ENCODE measurements at regions of chr6 and their contacts with region 1.

Region 1: DNA sequence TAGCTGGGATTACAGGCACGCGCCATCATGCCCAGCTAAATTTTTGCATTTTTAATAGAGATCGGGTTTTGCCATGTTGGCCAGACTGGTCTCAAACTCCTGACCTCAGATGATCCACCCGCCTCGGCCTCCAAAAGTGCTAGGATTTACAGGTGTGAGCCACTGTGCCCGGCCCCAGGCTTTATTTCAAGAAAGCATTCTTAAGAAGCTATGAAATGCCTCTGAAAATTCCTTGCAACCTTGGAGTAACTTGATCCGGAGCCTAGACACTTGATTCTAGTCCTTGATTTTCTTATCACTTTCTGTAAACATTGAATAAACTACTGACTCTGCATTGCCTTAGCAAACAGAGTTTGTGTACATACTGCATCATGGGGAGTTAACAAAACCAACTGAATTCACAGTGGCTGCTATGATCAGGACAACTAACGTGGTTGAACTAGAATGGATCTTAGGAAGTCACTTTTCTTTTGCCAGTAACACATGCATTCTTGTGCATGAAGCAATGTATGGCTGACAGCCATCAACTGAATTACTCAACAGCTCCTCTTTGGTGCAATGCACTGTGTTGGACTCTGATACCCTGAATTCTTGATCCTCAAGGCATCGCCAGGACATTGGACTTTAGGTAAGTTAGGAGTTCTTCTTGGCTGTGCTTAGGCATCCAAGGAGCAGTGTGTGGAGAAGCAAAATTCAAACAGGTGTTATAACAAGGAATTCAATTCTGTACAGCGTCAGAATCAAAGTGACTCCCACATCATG is 102.8 kb upstream of the TMEM170B start:
- DNase-seq: peak; percentile 79 to 98
- H3K4me3 ChIP-seq: no peak overlapping the region
- H3K27ac ChIP-seq: peak overlapping the region; percentile 87
- H3K4me1 ChIP-seq: peaks cover 52% of the 10 kb centered on the region
- H3K27me3 ChIP-seq: no peaks in the 10 kb centered on the region
- CTCF ChIP-seq: no peak

Region 2: DNA sequence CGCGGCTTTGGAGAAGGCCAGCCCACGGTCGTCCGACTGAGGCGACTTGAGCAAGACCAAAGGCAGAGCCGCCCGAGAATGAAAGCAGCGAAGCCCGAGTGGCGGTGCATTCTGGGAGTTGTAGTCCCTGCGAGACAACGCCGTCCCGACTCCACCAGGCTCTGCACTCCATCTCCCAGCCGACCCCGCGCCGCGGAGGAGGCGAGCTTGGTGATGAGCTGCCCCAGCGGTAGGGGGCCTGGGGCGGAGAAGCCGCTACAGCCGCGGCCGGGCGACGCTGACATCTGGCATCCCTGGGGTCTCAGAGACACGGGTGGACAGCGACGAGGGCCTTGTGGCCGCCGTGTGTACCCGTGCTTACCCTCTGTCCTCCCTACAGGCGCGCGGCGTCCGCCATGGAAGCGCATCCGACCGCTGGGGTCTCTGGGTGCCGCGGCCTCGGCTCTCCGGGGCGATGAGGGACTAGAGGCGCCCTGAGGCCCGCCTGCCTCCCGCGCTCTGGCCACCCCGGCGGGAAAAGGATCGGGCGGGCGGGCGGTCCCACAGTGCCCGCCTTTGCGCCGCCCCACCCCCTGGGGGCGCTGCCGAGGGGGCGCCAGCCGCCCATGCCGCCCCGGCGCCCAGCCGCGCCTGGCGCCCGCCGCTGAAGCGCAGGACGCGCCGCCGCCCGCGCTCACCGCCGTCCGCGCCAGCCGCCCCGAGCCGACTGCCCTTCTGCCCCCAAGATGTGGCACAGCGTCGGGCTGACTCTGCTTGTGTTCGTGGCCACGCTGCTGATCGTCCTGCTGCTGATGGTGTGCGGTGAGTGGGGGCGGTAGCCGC is 340.9 kb before region 1 on chr6 and contains the start of gene SMIM13:
- CTCF ChIA-PET with region 1: interaction called, 3 read pairs
- POLR2A ChIA-PET with region 1: interaction called, 7 read pairs
- intact Hi-C with region 1: loop called (anchors 2 kb)
- DNase-seq: peak; percentile 88 to 96
- H3K4me3 ChIP-seq: peak within 1 kb of the TSS; percentile 76
- H3K27ac ChIP-seq: peak within 1 kb of the TSS; percentile 64
- H3K4me1 ChIP-seq: 0 out of 2 replicates have a peak, but pooled peaks cover 8% of the 10 kb centered on the region
- H3K27me3 ChIP-seq: no peaks in the 10 kb centered on the region
- CTCF ChIP-seq: peak; percentile 56
- total RNA-seq, gene SMIM13: 16.7 and 22.2 TPM in 2 replicates

Region 3: DNA sequence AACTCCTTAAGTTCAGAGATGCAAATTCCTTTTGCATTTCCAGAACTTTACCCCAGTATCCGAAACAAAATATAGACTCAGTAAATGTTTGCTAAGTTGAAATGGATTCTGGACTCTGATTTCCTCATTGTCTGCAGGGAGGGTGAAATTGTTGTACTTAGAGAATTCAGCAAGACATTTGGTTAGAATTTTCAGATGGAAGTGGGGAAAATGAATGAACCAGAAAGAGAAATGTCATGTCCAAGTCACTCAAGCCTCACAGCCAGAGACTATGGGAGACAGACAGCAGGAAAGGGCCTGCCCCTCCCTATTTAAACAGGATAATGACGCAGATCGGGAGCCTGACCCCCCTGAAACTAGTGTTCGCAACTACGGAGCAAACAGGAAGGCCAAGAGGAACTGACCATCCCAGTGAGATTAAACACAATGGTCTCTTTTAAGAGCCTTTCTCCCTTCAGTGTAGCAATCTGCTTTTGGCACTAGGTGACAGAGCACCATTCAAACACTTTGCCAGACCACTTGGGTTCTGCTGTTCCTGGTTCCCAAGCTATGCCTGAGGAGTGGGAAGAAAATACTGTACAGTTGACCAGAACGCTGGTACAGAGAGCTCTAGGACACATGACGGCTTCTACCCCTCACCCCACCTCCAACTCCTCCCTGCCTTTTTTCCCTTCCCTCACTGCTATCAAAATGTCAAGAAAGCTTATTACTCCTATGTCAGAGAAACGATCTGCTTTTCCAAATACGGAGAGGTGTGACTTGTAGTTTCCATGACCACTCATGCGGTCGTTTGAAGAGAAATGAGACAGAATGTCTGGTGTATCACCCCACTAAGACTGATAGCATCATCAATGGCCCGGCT is 216.0 kb before region 1 on chr6:
- CTCF ChIA-PET with region 1: no interaction called
- POLR2A ChIA-PET with region 1: interaction called, 10 read pairs
- intact Hi-C with region 1: no loop called
- DNase-seq: no peak
- H3K4me3 ChIP-seq: no peak overlapping the region
- H3K27ac ChIP-seq: no peak overlapping the region
- H3K4me1 ChIP-seq: peaks cover 4% of the 10 kb centered on the region
- H3K27me3 ChIP-seq: no peaks in the 10 kb centered on the region
- CTCF ChIP-seq: no peak

Region 4: DNA sequence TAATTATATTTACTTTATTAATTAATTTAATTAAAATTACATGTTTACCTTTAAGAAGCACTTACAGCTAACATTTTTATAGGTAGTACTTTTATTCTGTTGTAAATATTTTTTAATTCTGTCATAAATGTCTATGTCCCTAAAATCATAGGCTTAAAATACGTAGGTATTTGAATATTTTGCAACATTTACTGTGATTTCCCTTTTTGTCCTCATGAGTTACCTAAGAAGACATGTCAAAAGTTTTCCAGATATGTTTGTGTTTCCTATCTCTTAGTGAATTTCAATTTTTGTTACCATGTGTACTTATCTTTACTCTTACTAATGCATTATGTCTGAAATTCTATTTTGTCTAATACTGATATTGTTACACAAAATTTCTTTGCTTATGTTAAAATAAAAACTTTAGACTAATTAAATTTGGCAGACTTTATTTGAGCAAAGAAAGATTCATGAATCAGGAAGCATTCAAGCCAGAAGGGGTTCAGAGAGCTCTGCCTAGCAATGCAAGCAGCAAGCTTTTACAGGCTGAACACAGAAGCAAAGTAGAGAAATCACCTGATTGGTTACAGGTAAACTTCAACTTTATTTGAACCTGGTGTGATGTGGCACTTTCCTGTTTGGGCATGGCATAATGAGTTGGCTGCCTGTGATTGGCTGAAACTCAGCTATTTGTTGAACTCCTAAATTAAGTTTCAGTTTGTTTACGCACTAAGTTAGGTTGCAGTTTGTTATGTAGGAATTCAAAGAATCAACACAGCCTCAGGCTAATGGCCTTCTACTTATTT is 20.4 kb before region 1 on chr6:
- CTCF ChIA-PET with region 1: interaction called, 3 read pairs
- POLR2A ChIA-PET with region 1: interaction called, 13 read pairs
- intact Hi-C with region 1: loop called (anchors 2 kb)
- DNase-seq: peak; percentile 69 to 94
- H3K4me3 ChIP-seq: peak overlapping the region; percentile 19; the same call in 1 of the 2 replicates
- H3K27ac ChIP-seq: peak overlapping the region; percentile 95
- H3K4me1 ChIP-seq: peaks cover 46% of the 10 kb centered on the region
- H3K27me3 ChIP-seq: no peaks in the 10 kb centered on the region
- CTCF ChIP-seq: no peak

Measured in PC-9 (cell line).